Activated naive CD8-positive, alpha-beta T cell treated with anti-CD3 and anti-CD28 coated beads, Interleukin-2, amount 10 ng/mL, durations not matched to agents 7 days and 5 days (primary cell): ENCODE measurements at regions of chr10 and their contacts with region 1.

Region 1: DNA sequence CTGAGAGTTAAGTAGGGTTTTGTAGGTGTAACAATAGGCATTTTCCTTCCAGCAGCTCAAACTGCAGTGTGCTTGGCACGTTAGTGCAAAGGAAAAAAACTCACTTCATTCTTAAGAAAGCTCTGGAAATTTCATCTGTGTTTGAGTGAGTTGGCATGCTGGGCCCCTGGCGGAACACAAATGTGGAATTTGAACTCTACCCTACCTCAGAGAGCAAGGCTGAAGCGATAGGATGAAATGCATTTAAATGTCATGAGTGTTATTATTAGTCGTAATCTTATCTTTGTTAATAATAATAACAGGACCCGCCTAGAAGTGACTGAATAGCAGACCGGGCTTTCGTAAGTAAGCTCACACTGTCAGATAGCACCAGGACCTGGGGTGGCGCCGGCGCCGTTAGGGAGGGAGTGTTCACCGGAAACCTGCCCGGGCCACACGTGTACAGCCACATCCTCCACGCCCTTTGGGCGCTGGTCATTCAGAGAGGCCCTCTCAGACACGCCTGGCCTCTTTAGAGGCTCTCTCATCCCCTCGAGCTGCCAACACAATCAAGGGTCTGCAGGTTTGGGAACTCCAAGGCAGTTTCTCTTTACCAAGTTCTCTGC is 63.5 kb downstream of the GRK5 start:
- DNase-seq: peak; percentile 66
- ATAC-seq: peak; percentile 48
- H3K4me3 Mint-ChIP-seq: peak overlapping the region; percentile 59
- H3K27ac Mint-ChIP-seq: peak overlapping the region; percentile 30
- H3K4me1 Mint-ChIP-seq: peaks cover 44% of the 10 kb centered on the region
- H3K27me3 Mint-ChIP-seq: no peaks in the 10 kb centered on the region

Region 2: GRCh38 chr10:119235356-119235755 is 35.5 kb before region 1 on chr10:
- POLR2A ChIA-PET with region 1: no interaction called
- DNase-seq: no peak
- ATAC-seq: no peak
- H3K4me3 Mint-ChIP-seq: no peak overlapping the region
- H3K27ac Mint-ChIP-seq: no peak overlapping the region
- H3K4me1 Mint-ChIP-seq: peaks cover 35% of the 10 kb centered on the region
- H3K27me3 Mint-ChIP-seq: no peaks in the 10 kb centered on the region

Region 3: GRCh38 chr10:119253433-119254174 is 17.3 kb before region 1 on chr10:
- POLR2A ChIA-PET with region 1: no interaction called
- DNase-seq: no peak
- ATAC-seq: peak; percentile 39
- H3K4me3 Mint-ChIP-seq: no peak overlapping the region
- H3K27ac Mint-ChIP-seq: no peak overlapping the region
- H3K4me1 Mint-ChIP-seq: peaks cover 8% of the 10 kb centered on the region
- H3K27me3 Mint-ChIP-seq: no peaks in the 10 kb centered on the region

Region 4: DNA sequence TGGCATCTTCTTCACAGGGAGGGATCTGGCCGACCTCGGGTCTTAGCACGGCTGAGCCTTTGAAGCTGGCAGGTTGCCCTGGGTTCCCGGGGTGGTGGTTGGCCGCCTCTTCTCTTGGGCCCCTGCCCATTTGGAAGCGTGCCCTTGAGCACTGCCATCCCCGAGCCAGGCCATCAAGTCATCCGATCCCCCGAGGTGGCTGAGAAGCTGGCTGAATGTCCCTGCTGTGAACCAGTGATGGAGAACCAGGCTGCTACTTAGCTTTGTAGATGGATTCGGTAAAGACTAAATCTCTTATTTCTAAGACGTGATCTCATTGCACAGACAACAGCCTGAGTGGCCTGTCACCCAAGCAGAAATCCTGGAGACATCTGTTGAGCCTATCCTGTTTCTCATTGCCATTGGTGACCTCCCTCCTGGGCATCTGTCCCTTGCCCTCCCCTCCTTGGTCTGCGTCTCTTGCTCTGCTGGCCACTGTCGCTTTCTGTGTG is 10.8 kb after region 1 on chr10:
- POLR2A ChIA-PET with region 1: interaction called, 17 read pairs
- DNase-seq: no peak
- ATAC-seq: no peak
- H3K4me3 Mint-ChIP-seq: no peak overlapping the region
- H3K27ac Mint-ChIP-seq: no peak overlapping the region
- H3K4me1 Mint-ChIP-seq: peaks cover 44% of the 10 kb centered on the region
- H3K27me3 Mint-ChIP-seq: no peaks in the 10 kb centered on the region

Region 5: DNA sequence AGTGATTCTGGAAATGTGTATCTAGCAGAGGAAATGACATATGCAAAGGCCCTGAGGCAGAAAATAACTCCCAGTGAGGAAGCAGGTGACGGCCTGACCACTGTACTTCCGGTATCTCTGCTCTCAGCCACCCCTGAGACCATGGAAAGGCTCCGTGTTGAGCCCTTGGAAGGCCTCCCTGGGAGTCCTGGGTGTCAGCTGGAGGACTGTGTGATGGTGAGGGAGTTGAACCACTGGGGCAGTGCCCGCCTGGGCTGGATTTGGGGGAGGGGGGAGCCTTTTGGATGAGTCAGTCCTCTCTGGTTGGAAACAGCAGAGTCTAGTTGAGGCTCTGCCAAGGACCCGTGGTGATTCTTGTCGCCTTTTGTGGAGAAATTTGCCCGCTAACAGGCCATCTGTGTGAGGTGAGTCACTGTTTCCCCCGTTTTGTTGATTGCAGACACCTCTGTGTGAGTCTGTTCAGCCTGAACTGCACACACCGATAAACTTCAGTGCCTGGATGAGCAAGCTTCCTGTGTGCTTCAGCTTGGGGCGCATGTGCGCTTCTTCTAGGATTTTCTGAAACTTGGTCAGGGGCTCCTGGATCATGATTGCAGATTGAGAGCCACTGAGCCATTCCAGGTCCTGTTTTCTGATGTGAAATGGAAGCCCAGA is 35.1 kb after region 1 on chr10:
- POLR2A ChIA-PET with region 1: interaction called, 16 read pairs
- DNase-seq: peak; percentile 76
- ATAC-seq: peak; percentile 85
- H3K4me3 Mint-ChIP-seq: peak overlapping the region; percentile 88
- H3K27ac Mint-ChIP-seq: peak overlapping the region; percentile 98
- H3K4me1 Mint-ChIP-seq: peaks cover 70% of the 10 kb centered on the region
- H3K27me3 Mint-ChIP-seq: peaks cover 11% of the 10 kb centered on the region